Upper lobe of right lung (tissue), 1 donor: ENCODE measurements at regions of chr9 and their contacts with region 1.

Region 1: GRCh38 chr9:126500684-126501382 is 112.9 kb upstream of the LMX1B start:
- DNase-seq: peak; percentile 85
- ATAC-seq: peak; percentile 76
- H3K4me3 ChIP-seq: no peak overlapping the region
- H3K27ac ChIP-seq: no peak overlapping the region
- H3K4me1 ChIP-seq: peaks cover 5% of the 10 kb centered on the region
- H3K27me3 ChIP-seq: no peaks in the 10 kb centered on the region
- CTCF ChIP-seq: peak; percentile 98

Region 2: GRCh38 chr9:126558051-126558665 is 57.3 kb after region 1 on chr9:
- intact Hi-C with region 1: loop called (anchors 5 kb)
- DNase-seq: peak; percentile 77
- ATAC-seq: peak; percentile 96
- H3K4me3 ChIP-seq: no peak overlapping the region
- H3K27ac ChIP-seq: no peak overlapping the region
- H3K4me1 ChIP-seq: no peaks in the 10 kb centered on the region
- H3K27me3 ChIP-seq: peaks cover 10% of the 10 kb centered on the region
- CTCF ChIP-seq: peak; percentile 89